Activated CD4-positive, alpha-beta T cell treated with anti-CD3 and anti-CD28 coated beads for 36 hours (primary cell): ENCODE measurements at regions of chr11 and their contacts with region 1.

Region 1: DNA sequence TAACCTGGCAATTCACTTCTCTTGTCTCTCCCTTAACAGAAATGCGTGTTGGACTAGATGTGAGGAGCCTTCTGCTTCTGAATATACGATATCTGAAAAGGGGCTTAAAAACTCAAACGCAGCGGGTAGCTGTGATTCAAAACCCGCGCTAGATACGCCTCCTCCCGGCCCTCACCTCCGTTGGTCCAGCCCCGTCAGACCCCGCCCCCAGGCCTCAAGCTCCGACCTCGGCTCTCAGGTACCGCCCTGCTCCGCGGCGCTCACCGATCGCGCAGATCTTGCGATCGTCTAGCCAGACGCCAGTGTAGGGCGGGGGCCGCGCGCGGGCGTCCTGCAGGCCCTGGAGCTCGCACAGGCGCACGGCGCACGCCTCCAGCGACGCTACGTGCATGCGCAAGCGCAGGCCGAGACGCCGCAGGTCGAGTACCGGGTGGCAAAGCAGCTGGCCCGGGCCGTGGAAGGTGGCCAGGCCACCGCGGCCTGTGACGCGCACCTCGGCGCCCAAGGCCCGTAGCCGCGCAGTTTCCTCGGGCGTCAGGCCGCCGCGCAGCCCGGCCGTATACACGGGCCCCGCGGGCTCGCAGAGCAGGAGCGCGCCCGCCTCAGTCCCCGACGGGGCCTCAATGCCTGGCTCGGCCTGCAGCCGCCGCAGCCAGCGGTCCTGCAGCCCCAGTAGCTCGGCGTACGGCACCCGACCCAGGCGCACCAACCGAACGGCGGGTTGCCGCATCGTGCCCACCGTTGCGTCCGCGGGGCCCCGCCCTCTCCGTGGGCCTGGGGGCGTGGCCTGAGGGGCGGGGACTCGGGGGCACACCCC is at the start of gene LIPT2:
- DNase-seq: peak; percentile 99
- ATAC-seq: peak; percentile 96
- H3K4me3 Mint-ChIP-seq: peak within 1 kb of the TSS; percentile 73
- H3K27ac Mint-ChIP-seq: peak within 1 kb of the TSS; percentile 86
- H3K4me1 Mint-ChIP-seq: peaks cover 22% of the 10 kb centered on the region
- H3K27me3 Mint-ChIP-seq: no peaks in the 10 kb centered on the region
- total RNA-seq, gene LIPT2: 4.2 to 5.0 TPM

Region 2: DNA sequence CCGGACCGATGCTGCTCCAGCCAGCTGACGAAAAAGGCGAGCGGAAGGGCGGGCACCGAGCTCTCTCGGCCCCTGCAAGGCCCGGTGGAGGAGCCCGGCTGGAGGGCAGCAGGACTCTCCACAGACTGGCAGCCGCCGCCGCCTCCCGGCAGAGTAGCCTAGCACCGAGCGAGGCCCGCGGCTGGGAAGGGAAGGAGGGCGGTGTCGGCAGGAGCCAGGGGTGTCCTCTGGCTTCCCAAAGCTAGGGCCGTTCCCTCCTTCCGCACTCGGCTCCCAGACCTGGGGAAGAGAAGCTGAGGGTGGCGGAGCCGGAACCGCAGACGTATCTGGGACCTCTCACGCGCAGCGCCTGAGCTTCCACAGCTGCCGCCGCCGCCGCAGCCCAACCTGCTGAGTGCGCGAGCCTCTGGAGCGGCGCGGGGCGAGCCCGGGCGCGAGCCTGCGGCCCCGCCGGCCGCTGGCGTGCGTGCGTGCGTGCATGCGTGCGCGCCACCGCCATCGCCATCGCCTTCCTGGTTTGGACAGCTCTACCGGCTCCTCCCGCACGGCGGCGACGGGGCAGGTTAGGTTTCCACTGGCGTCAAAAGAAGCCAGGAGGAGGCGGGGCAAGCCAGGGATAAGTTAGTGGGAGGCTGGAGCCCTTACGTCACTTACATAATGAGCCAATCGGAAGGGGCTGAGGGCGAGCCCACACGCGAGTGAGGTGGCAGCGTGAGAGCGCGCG is 732.3 kb before region 1 on chr11 and contains the start of gene RAB6A:
- CTCF ChIA-PET with region 1: no interaction called
- POLR2A ChIA-PET with region 1: interaction called, 3 read pairs
- intact Hi-C with region 1: loop called in 1 of 2 experiments (anchors 1 kb)
- DNase-seq: peak; percentile 100
- ATAC-seq: peak; percentile 93
- H3K4me3 Mint-ChIP-seq: peak within 1 kb of the TSS; percentile 97
- H3K27ac Mint-ChIP-seq: peak within 1 kb of the TSS; percentile 86
- H3K4me1 Mint-ChIP-seq: peaks cover 22% of the 10 kb centered on the region
- H3K27me3 Mint-ChIP-seq: no peaks in the 10 kb centered on the region
- total RNA-seq, gene RAB6A: 57.9 to 58.9 TPM

Region 3: DNA sequence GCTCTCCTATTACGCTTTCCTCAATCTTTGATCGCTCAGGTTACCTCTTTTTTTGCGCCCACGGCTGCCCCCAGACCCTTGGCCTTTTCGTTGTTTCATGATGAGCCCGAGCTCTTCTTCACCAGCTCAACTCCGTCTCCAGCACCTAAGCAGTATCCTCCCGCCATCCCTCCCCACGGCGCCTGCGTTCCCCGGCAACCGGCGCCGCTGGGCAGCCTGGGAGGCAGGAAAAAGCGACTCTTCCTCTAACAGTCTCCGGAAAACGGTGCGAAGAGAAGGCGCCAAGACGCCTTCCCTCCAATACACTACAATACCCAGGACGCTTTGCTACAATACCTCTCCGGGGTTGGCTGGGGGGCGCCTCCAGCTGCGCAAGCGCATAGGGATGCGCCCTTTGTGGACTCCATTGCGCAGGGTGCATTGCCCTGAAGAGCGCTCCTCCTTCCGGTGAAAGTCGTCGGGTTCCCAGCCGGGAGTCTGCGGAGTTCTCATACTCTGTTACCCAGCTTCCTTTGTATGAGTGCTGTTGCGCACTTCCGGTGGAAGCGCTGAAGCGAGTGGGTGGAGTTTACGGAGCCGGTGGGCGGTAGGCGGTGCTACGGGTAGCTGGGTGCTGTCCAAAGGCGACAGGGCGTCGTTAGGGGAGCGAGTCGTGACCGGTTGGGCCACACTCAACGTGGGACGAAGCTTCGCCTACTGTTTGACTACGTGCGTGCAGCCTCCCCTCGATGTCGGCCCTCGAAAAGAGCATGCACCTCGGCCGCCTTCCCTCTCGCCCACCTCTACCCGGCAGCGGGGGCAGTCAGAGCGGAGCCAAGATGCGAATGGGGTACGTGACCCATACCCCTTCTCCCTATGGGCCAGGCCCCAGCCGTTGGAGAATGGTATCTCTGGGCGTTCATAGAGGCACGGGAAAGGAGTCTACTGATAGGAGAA is 322.2 kb before region 1 on chr11 and contains the starts of genes C2CD3 and PPME1:
- CTCF ChIA-PET with region 1: interaction called, 3 read pairs
- POLR2A ChIA-PET with region 1: no interaction called
- intact Hi-C with region 1: loop called in 1 of 2 experiments (anchors 1 kb)
- DNase-seq: peak; percentile 98
- ATAC-seq: peak; percentile 96
- H3K4me3 Mint-ChIP-seq: no peak within 1 kb of the TSS
- H3K27ac Mint-ChIP-seq: no peak within 1 kb of the TSS
- H3K4me1 Mint-ChIP-seq: peaks cover 16% of the 10 kb centered on the region
- H3K27me3 Mint-ChIP-seq: no peaks in the 10 kb centered on the region
- total RNA-seq, gene C2CD3: 23.9 to 28.0 TPM
- total RNA-seq, gene PPME1: 54.2 to 61.5 TPM

Region 4: DNA sequence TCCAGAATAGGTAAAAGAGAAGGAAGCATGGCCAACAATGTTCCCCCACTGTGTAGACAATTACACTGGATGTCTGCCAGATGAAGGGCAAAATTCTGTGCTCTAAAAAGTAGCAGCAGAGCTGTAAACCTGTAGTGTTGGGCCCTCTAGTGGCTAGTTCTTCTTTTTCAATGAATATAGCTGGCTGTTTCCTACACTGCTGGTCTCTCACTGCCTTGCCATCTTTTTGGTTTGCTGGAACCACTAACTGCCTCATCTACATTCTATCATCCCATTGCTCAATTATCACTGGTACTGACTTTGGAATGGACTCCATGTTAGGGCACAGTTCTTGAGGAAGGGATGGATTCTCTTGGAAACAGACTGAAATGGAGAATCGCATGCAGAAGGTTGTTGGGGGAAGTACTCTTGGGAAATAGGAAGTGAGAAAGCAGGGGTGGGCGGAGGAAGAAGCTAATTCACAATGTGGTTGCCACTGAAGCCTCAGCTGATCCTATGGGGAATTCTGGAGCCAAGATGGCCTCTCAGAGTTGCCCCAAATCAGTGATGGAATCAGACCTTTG is 43.7 kb before region 1 on chr11:
- CTCF ChIA-PET with region 1: interaction called, 13 read pairs
- POLR2A ChIA-PET with region 1: no interaction called
- intact Hi-C with region 1: no loop called
- DNase-seq: peak; percentile 47
- ATAC-seq: peak; percentile 94
- H3K4me3 Mint-ChIP-seq: no peak overlapping the region
- H3K27ac Mint-ChIP-seq: no peak overlapping the region
- H3K4me1 Mint-ChIP-seq: peaks cover 4% of the 10 kb centered on the region
- H3K27me3 Mint-ChIP-seq: peaks cover 6% of the 10 kb centered on the region

Region 5: DNA sequence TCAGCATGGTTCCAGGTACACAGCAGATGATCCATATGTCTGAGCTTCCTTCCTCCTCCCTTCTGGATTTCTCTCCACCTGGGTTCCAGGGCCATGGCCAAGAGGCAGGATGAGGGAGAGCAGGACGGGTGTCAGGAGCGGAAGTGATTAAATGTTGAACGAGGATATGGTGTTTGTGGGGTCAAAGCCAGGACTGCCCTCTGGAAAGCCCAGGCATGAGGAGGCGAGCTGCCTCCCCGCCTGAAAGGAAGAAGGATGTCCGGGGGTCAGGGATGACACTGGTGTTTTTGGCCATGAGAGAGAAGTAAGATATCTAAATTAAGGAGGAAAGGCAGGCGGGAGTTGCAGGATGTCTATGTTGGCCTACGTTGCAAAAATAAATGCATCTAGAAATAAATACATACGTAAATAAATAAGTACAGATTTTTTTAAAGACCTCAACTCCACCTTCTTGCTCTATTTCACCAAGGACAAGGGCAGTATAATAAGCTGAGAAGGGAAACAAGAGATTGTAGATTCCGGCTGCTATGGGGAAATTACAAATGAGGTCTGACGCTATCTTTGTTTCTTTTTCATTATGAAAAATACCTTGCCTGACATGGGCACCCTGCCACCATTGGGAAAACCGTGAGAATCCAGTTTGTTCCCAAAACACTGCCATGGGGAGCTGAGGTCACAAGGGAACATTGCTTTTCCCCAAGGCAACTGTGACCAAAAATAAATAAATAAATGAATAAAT is 27.9 kb after region 1 on chr11:
- CTCF ChIA-PET with region 1: no interaction called
- POLR2A ChIA-PET with region 1: no interaction called
- intact Hi-C with region 1: no loop called
- DNase-seq: no peak
- ATAC-seq: no peak
- H3K4me3 Mint-ChIP-seq: no peak overlapping the region
- H3K27ac Mint-ChIP-seq: no peak overlapping the region
- H3K4me1 Mint-ChIP-seq: no peaks in the 10 kb centered on the region
- H3K27me3 Mint-ChIP-seq: peaks cover 11% of the 10 kb centered on the region

Region 6: DNA sequence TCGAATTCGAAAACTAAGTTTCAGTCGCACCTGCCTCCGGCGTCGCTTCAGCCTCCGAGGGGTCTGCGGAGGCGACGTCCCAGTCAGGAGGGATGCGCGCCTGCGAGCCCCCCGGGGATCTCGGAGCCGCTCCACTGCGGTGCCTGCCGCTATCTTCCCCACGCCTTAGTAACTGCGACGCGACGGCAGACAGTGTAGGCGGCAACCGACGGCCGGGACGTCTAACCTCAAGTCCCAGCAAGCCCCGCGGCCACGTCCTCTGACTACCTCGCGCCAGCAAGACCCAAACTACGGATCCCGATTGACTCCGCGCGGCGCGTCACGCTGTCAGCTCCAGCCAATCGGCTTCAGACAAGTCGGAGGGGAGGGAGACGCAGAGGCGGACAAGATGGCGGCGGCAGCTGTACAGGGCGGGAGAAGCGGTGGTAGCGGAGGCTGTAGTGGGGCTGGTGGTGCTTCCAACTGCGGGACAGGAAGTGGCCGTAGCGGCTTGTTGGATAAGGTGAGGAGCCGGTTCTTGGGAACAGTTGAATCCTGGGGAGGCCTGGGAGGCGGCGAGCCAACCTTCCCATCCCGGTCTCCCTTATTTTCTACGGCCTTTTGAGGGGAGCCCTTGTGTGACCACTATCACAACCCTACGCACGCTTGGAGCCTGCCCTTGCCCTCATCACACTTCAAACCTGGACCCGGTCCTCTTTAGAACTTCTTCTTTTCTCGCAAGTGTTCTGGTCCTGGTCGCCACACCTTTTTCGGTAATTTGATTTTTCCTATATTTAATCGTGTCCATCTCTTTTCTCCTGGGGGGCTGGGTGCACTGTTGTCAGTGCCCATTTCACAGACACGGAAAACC is 455.9 kb after region 1 on chr11 and contains the starts of genes SPCS2 and XRRA1:
- CTCF ChIA-PET with region 1: no interaction called
- POLR2A ChIA-PET with region 1: no interaction called
- intact Hi-C with region 1: loop called in 1 of 2 experiments (anchors 1 kb)
- DNase-seq: peak; percentile 100
- ATAC-seq: peak; percentile 99
- H3K4me3 Mint-ChIP-seq: peak within 1 kb of the TSS; percentile 96
- H3K27ac Mint-ChIP-seq: peak within 1 kb of the TSS; percentile 97
- H3K4me1 Mint-ChIP-seq: peaks cover 42% of the 10 kb centered on the region
- H3K27me3 Mint-ChIP-seq: no peaks in the 10 kb centered on the region
- total RNA-seq, gene SPCS2: 124 to 131 TPM
- total RNA-seq, gene XRRA1: 7.8 to 11.9 TPM

Region 7: GRCh38 chr11:75814686-75815344 is 1321.6 kb after region 1 on chr11 and contains the start of gene UVRAG:
- CTCF ChIA-PET with region 1: no interaction called
- POLR2A ChIA-PET with region 1: no interaction called
- intact Hi-C with region 1: loop called in 1 of 2 experiments (anchors 2 kb)
- DNase-seq: peak; percentile 98
- ATAC-seq: peak; percentile 93
- H3K4me3 Mint-ChIP-seq: no peak within 1 kb of the TSS
- H3K27ac Mint-ChIP-seq: peak within 1 kb of the TSS; percentile 80
- H3K4me1 Mint-ChIP-seq: peaks cover 16% of the 10 kb centered on the region
- H3K27me3 Mint-ChIP-seq: no peaks in the 10 kb centered on the region
- total RNA-seq, gene UVRAG: 11.4 to 13.4 TPM